ENCODE measurements at regions of chr6 and their contacts with region 1.

Region 1: DNA sequence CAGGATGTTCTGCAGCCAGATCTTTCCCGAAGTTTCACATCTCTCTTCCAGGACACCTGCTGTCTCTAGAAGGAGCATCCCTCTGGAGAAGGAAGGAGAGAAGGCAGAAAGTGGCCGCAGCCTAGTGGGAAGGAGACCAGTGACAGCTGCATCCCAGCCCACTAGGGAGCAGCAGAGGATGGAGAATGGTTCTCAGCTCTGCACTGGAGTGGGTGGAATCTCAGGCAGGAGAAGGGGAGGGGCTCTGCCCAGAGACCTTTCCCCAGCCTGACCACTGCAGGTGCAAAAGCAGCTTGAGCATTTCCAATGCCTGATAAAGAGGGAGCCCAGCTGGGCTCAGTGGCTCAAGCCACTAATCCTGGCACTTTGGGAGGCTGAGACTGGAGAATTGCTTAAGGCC is 32.3 kb downstream of the NCR2 start:
- DNase-seq: peak in 1 of 9 donors; percentile 20
- ATAC-seq: no peak
- H3K4me3 ChIP-seq: no peak overlapping the region
- H3K4me3 Mint-ChIP-seq: no peak overlapping the region
- H3K27ac ChIP-seq: no peak overlapping the region
- H3K27ac Mint-ChIP-seq: no peak overlapping the region
- H3K4me1 ChIP-seq: peaks cover 7 to 9% of the 10 kb centered on the region in 2 donors
- H3K4me1 Mint-ChIP-seq: peaks cover 17 to 27% (median 22%) of the 10 kb centered on the region in 7 donors
- H3K27me3 ChIP-seq: peaks cover 4 to 8% of the 10 kb centered on the region in 2 donors
- H3K27me3 Mint-ChIP-seq: peaks cover 45 to 78% (median 58%) of the 10 kb centered on the region in 5 donors

Region 2: DNA sequence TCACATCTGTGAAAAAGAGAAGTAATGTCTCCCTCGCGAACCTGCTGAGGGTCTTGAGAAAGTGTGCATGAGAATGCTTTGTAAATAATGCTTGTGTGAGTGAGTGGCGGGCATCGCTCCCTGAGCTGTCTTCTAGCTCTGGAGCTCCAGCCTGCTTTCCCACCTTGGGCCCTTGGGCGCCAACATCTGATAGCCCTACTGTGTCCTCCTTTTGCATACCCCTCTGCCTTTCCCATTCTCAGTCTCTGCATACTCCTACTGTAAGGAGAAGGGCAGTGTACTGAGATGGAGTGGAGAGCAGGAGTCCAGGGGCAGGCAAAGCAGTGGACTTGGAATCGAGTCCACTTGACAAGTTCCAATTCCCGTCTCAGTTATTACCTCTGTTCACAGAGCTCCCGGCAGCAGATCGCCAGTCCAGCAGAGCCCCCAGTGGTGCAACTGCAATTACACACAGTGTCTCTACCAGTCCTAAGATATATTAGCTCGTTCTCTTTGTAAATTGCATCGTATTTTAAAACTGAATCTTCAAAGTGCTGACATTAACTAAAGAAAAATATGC is 33.1 kb before region 1 on chr6:
- CTCF ChIA-PET with region 1: interaction called, 5 read pairs
- POLR2A ChIA-PET with region 1: no interaction called
- intact Hi-C with region 1: loop called in 1 of 2 experiments (anchors 1 kb)
- DNase-seq: no peak
- ATAC-seq: no peak
- H3K4me3 ChIP-seq: no peak overlapping the region
- H3K4me3 Mint-ChIP-seq: peak overlapping the region in 9 of 10 donors; percentile 16 to 79 (median 66)
- H3K27ac ChIP-seq: peak overlapping the region; percentile 57
- H3K27ac Mint-ChIP-seq: peak overlapping the region; percentile 83 to 96 (median 89)
- H3K4me1 ChIP-seq: peaks cover 31 to 43% of the 10 kb centered on the region in 2 donors
- H3K4me1 Mint-ChIP-seq: peaks cover 21 to 62% (median 51%) of the 10 kb centered on the region in 7 donors
- H3K27me3 ChIP-seq: no peaks in the 10 kb centered on the region
- H3K27me3 Mint-ChIP-seq: peaks cover 0 to 17% (median 0%) of the 10 kb centered on the region in 5 donors

Region 3: DNA sequence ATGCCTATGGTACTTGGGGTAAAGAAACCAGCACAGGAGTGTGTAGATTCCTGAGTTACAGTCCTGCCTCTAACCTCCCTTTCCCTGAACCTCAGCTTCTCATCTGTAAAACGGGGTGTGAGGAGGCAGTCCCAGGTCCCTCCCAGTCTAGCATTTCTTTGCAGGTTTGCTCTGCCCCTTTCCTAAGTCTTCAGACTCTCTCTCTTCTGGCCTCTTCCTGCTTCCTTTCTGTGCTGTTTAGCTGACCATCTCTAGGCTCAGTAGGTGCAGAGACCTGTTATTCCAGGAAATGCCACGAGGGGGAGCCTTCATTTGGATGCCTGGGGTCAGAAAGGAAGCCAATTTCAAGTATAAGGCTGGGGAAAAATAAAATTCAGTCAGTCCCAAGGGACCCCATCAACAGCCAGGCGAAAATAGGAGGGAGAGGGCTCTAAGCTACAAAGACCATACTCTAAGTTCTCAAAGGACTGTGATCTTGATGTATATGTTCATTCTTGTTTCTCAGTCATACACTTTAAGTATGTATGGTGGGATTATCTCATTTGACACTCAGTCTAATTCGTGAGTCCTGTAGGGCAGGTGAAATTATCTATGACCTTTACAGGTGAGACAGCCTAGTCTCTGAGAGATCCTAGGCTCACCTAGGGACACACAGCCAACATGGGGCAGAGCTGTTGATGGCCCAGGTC is 56.8 kb after region 1 on chr6:
- CTCF ChIA-PET with region 1: interaction called, 4 read pairs
- POLR2A ChIA-PET with region 1: no interaction called
- intact Hi-C with region 1: loop called in 1 of 2 experiments (anchors 2 kb)
- DNase-seq: peak; percentile 47 to 81 (median 67)
- ATAC-seq: peak; percentile 77
- H3K4me3 ChIP-seq: no peak overlapping the region
- H3K4me3 Mint-ChIP-seq: no peak overlapping the region
- H3K27ac ChIP-seq: no peak overlapping the region
- H3K27ac Mint-ChIP-seq: no peak overlapping the region
- H3K4me1 ChIP-seq: peaks cover 0 to 25% of the 10 kb centered on the region in 2 donors
- H3K4me1 Mint-ChIP-seq: peaks cover 6 to 10% (median 9%) of the 10 kb centered on the region in 7 donors
- H3K27me3 ChIP-seq: peaks cover 6 to 21% of the 10 kb centered on the region in 2 donors
- H3K27me3 Mint-ChIP-seq: peaks cover 15 to 33% (median 22%) of the 10 kb centered on the region in 5 donors

Region 4: DNA sequence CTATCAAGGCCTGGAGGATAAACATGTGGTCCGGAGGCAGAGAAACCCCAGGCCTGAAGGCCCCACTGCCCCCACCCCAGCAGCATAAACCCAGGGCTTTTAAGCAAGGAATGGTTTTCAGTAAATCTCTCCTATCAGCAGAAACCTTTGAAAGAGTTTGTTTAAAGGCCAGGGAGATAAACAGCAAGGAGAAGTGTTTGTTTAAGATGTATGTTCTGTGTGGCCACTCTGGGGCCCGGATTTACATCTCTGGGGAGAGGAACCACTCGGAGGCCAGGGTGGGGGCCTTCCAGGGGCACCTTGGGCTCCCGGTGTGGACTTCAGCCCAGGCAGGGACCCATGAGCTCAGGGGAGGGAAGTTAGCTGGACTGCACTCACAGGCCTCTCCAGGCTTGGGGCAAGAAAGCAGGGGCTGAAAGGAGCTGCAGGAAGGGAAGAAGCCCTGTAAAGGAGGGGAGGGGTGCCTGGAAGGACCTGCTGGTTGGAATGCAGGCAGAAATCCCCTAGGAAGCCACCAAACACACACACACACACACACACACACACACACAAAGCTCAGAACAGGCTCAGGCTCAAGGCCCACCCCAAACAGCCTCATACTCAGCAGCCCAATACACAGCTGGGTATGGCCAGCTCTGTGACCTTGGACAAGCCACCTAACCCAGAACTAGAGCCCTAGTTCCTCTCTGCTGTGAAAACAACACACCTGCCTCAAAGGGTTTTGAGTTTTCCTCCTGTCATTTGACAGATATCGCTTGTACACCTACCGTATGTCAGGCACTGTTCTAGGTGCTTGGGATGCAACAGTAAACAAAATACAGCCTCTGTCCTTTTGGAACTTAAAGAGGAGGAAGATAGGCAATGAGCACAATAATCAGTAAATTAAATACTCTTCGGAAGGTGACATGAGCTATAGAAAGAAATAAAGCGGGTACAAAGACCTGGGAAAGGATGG is 152.3 kb after region 1 on chr6:
- CTCF ChIA-PET with region 1: no interaction called
- POLR2A ChIA-PET with region 1: no interaction called
- intact Hi-C with region 1: no loop called
- DNase-seq: no peak
- ATAC-seq: no peak
- H3K4me3 ChIP-seq: no peak overlapping the region
- H3K4me3 Mint-ChIP-seq: no peak overlapping the region
- H3K27ac ChIP-seq: no peak overlapping the region
- H3K27ac Mint-ChIP-seq: no peak overlapping the region
- H3K4me1 ChIP-seq: no peaks in the 10 kb centered on the region
- H3K4me1 Mint-ChIP-seq: no peaks in the 10 kb centered on the region
- H3K27me3 ChIP-seq: no peaks in the 10 kb centered on the region
- H3K27me3 Mint-ChIP-seq: peaks cover 0 to 38% (median 5%) of the 10 kb centered on the region in 5 donors

Region 5: GRCh38 chr6:41591859-41592502 is 224.3 kb after region 1 on chr6:
- CTCF ChIA-PET with region 1: interaction called, 5 read pairs
- POLR2A ChIA-PET with region 1: no interaction called
- intact Hi-C with region 1: loop called (anchors 1 kb)
- DNase-seq: peak; percentile 48 to 79 (median 71)
- ATAC-seq: peak; percentile 81
- H3K4me3 ChIP-seq: no peak overlapping the region
- H3K4me3 Mint-ChIP-seq: no peak overlapping the region
- H3K27ac ChIP-seq: no peak overlapping the region
- H3K27ac Mint-ChIP-seq: no peak overlapping the region
- H3K4me1 ChIP-seq: peaks cover 0 to 5% of the 10 kb centered on the region in 2 donors
- H3K4me1 Mint-ChIP-seq: peaks cover 0 to 4% (median 0%) of the 10 kb centered on the region in 7 donors
- H3K27me3 ChIP-seq: no peaks in the 10 kb centered on the region
- H3K27me3 Mint-ChIP-seq: no peaks in the 10 kb centered on the region